Mammary epithelial cell (primary cell): ENCODE measurements at regions of chr4 and their contacts with region 1.

Region 1: DNA sequence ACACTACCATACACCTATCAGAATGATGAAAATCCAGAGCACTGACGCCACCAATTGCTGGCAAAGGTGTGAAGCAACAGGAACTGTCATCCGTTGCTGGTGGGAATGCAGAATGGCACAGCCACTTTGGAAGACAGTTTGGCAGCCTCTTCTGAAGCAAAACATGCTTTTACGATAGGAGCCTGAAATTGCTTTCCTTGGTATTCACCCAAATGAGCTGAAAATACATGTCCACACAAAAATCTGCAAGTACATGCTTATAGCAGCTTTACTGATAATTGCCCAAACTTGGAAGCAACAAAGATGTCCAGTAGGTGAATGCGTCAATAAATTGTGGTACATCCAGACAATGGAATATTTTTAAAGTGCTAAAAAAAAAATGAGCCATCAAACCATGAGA is 322.8 kb upstream of the FAT1 start:
- DNase-seq: peak; percentile 55
- H3K4me3 ChIP-seq: no peak overlapping the region
- H3K27ac ChIP-seq: no peak overlapping the region
- H3K4me1 ChIP-seq: peaks cover 17% of the 10 kb centered on the region
- H3K27me3 ChIP-seq: no peaks in the 10 kb centered on the region
- CTCF ChIP-seq: peak in 1 of 2 donors; percentile 27

Region 2: DNA sequence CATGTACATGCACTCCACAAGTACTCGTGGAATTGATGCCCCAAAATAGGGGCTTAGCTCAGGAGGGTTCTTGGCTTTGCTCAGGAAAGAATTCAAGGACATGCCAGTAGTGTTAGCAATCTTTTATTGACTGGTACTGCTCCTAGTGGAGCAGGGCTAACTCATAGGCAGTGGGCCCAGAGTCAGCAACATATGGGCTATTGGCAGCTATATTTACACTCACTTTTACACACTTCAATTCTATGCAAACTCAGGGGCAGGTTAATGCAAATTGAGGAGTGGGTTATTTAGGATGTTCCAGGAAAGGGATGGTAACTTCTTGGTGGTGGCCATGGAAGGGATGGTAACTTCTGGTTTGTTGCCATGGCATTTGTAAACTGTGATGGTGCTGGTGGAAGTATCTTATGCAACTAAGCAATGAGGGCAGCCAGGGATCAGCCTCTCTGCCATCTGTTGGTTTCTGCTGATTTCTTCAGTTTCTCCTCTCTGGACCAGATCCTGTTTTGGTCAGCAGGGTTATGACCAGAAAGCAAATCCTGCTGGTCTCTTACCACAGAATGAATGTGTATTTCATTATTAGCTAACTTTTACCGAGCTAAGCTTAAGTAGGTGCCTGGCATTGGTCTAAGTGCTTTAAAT is 253.6 kb before region 1 on chr4:
- CTCF ChIA-PET with region 1: interaction called, 10 read pairs
- dilution Hi-C with region 1: no loop called
- in situ Hi-C with region 1: no loop called
- intact Hi-C with region 1: no loop called
- DNase-seq: no peak
- H3K4me3 ChIP-seq: no peak overlapping the region
- H3K27ac ChIP-seq: no peak overlapping the region
- H3K4me1 ChIP-seq: no peaks in the 10 kb centered on the region
- H3K27me3 ChIP-seq: no peaks in the 10 kb centered on the region
- CTCF ChIP-seq: no peak

Region 3: GRCh38 chr4:186946682-186947294 is 99.7 kb before region 1 on chr4:
- CTCF ChIA-PET with region 1: no interaction called
- dilution Hi-C with region 1: no loop called
- in situ Hi-C with region 1: no loop called
- intact Hi-C with region 1: loop called (anchors 10 kb)
- DNase-seq: no peak
- H3K4me3 ChIP-seq: no peak overlapping the region
- H3K27ac ChIP-seq: no peak overlapping the region
- H3K4me1 ChIP-seq: no peaks in the 10 kb centered on the region
- H3K27me3 ChIP-seq: no peaks in the 10 kb centered on the region
- CTCF ChIP-seq: peak; percentile 22 to 33

Region 4: DNA sequence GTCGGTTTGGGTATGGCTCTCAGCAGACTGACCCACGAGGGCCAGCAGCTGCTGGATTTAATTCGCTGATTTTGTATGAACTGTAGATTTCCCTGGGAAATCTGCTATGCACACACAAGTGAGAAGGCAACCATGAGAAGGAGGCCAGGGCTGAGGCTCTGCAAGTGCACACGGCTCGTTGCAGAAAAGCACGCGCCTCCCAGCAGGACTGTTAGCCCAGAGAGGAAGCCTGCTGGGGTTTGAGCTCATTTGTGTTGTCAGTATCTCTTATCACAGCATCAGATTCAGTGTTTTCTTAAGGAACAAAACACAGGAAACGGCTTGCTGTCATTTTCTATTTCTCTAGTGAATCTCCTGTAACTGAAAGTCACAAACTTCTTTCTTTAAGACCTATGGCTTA is 26.6 kb before region 1 on chr4:
- CTCF ChIA-PET with region 1: no interaction called
- dilution Hi-C with region 1: no loop called
- in situ Hi-C with region 1: no loop called
- intact Hi-C with region 1: no loop called
- DNase-seq: no peak
- H3K4me3 ChIP-seq: no peak overlapping the region
- H3K27ac ChIP-seq: no peak overlapping the region
- H3K4me1 ChIP-seq: no peaks in the 10 kb centered on the region
- H3K27me3 ChIP-seq: no peaks in the 10 kb centered on the region
- CTCF ChIP-seq: no peak

Region 5: GRCh38 chr4:187071946-187072600 is 25.6 kb after region 1 on chr4:
- CTCF ChIA-PET with region 1: no interaction called
- dilution Hi-C with region 1: no loop called
- in situ Hi-C with region 1: no loop called
- intact Hi-C with region 1: no loop called
- DNase-seq: no peak
- H3K4me3 ChIP-seq: no peak overlapping the region
- H3K27ac ChIP-seq: no peak overlapping the region
- H3K4me1 ChIP-seq: peaks cover 5% of the 10 kb centered on the region
- H3K27me3 ChIP-seq: no peaks in the 10 kb centered on the region
- CTCF ChIP-seq: no peak

Region 6: GRCh38 chr4:187302457-187303150 is 256.1 kb after region 1 on chr4:
- CTCF ChIA-PET with region 1: no interaction called
- dilution Hi-C with region 1: no loop called
- in situ Hi-C with region 1: no loop called
- intact Hi-C with region 1: loop called (anchors 10 kb)
- DNase-seq: no peak
- H3K4me3 ChIP-seq: no peak overlapping the region
- H3K27ac ChIP-seq: no peak overlapping the region
- H3K4me1 ChIP-seq: peaks cover 19% of the 10 kb centered on the region
- H3K27me3 ChIP-seq: no peaks in the 10 kb centered on the region
- CTCF ChIP-seq: no peak

Region 7: DNA sequence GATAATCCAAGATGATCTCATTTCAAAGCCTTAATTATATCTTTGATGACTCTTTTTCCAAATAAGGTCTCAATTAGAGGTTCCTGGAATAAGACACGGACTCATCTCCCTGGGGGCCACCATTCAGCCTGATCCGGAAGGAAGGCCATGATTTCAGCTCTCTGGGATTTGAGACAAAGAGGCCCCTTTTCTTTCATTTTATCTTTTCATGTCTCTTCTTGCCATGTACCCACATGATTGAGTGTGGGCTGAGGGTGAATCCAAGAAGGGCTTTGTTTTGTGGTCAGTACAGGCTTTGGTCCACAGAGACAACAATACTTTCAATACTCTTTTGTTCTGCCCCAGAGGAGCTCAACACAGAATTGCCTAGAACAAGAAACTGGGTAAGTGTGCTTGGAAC is 1354.0 kb after region 1 on chr4:
- CTCF ChIA-PET with region 1: no interaction called
- dilution Hi-C with region 1: no loop called
- in situ Hi-C with region 1: no loop called
- intact Hi-C with region 1: no loop called
- DNase-seq: peak; percentile 80
- H3K4me3 ChIP-seq: peak overlapping the region in 1 of 3 experiments; percentile 43
- H3K27ac ChIP-seq: peak overlapping the region; percentile 85
- H3K4me1 ChIP-seq: peaks cover 45% of the 10 kb centered on the region
- H3K27me3 ChIP-seq: no peaks in the 10 kb centered on the region
- CTCF ChIP-seq: no peak